ENCODE measurements at regions of chr1 and their contacts with region 1.

Region 1: DNA sequence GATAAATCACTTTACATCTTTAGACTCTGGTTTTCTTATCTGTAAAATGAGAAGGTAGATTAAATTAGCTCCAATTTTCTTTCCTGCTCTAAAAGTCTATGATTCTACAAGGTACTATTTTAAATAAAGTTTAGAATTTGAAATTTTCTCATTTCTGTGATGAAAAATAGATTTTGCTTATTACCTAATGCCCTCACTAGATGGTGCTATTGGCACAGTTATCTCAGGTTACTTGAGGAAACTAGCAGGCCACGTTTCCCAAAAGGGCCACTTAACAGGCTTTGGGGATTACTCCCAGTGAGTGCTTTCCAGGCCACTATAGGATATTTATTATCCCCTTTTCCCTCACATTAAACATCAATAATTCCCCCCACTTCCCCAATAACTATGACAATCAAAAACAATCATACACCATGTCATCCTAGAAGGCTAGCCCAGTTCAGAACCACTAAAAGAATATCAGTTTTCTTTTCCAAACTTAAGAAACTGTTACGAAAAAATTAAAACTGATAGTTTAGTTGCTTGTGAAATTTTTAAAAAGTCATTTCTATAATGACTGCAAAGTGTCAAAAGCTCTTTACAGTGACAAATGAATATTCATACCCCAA is 30.6 kb downstream of the OMA1 start:
- DNase-seq: peak in 1 of 2 donors; percentile 43
- ATAC-seq: peak in 4 of 8 donors; percentile 60 to 75 (median 70)
- H3K4me3 ChIP-seq: no peak overlapping the region
- H3K27ac ChIP-seq: peak overlapping the region in 1 of 10 donors; percentile 24
- H3K4me1 ChIP-seq: peaks cover 0 to 11% (median 0%) of the 10 kb centered on the region in 9 donors
- H3K27me3 ChIP-seq: no peaks in the 10 kb centered on the region
- CTCF ChIP-seq: peak; percentile 51 to 88 (median 76)

Region 2: DNA sequence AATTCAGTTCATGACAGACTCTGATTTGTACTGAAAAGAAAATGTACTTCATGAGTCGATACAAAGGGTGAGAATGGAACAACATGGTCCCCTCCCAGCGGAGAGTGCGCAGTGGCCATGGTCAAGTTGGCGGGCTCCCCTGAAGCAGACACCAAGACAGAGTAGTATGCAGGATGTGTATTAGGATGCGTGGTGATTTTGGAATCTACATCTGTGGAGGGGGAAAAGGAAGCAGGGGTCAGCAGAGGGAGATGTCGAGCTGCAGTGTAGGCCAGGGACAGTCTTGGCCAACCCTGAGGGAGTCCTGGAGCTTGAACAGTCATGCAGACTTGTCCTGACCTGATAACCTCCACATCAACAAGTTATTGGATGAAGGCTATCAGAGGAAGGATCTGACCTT is 450.4 kb before region 1 on chr1:
- intact Hi-C with region 1: no loop called
- DNase-seq: no peak
- ATAC-seq: no peak
- H3K4me3 ChIP-seq: no peak overlapping the region
- H3K27ac ChIP-seq: no peak overlapping the region
- H3K4me1 ChIP-seq: no peaks in the 10 kb centered on the region
- H3K27me3 ChIP-seq: peaks cover 0 to 4% (median 0%) of the 10 kb centered on the region in 7 donors
- CTCF ChIP-seq: no peak

Region 3: GRCh38 chr1:58546520-58547308 is 30.8 kb after region 1 on chr1 and contains the start of gene OMA1:
- intact Hi-C with region 1: loop called in 6 of 10 experiments (anchors 2 to 5 kb)
- DNase-seq: peak; percentile 97 to 98
- ATAC-seq: peak; percentile 99 to 100 (median 99)
- H3K4me3 ChIP-seq: peak within 1 kb of the TSS; percentile 37 to 87 (median 78)
- H3K27ac ChIP-seq: peak within 1 kb of the TSS; percentile 97 to 100 (median 99)
- H3K4me1 ChIP-seq: peaks cover 0 to 21% (median 14%) of the 10 kb centered on the region in 9 donors
- H3K27me3 ChIP-seq: no peaks in the 10 kb centered on the region
- CTCF ChIP-seq: peak; percentile 94 to 99 (median 97)
- total RNA-seq, gene OMA1: 20.7 to 50.9 (median 37.4) TPM

Region 4: DNA sequence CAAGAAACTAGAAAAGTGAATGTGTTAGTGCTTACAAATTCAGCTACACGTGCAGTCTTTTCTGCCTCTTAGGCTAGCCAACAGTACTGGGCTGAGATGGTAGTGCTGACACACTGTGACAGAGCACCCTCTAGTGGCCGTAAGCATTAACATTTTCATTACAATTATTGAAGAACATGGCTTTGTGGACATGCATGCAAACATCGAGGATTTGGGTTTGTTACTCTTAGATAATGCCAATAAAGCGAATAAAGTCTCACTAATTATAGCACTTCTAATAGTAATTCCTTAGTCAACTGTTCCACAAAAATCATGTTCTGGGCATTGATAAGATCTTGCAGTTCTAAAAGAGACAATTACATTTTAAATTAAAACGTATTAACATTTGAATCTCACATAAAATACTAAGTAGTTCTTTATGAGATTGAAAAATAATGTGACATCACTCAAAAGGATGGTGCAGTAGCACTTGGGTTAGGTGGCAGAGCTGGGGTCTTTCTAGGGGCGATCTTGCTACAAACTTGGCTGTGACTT is 136.8 kb after region 1 on chr1:
- intact Hi-C with region 1: loop called (anchors 1 to 10 kb)
- DNase-seq: peak in 1 of 2 donors; percentile 61
- ATAC-seq: peak; percentile 77 to 92 (median 86)
- H3K4me3 ChIP-seq: no peak overlapping the region
- H3K27ac ChIP-seq: no peak overlapping the region
- H3K4me1 ChIP-seq: peaks cover 0 to 13% (median 0%) of the 10 kb centered on the region in 9 donors
- H3K27me3 ChIP-seq: no peaks in the 10 kb centered on the region
- CTCF ChIP-seq: peak; percentile 67 to 88 (median 82)

Region 5: DNA sequence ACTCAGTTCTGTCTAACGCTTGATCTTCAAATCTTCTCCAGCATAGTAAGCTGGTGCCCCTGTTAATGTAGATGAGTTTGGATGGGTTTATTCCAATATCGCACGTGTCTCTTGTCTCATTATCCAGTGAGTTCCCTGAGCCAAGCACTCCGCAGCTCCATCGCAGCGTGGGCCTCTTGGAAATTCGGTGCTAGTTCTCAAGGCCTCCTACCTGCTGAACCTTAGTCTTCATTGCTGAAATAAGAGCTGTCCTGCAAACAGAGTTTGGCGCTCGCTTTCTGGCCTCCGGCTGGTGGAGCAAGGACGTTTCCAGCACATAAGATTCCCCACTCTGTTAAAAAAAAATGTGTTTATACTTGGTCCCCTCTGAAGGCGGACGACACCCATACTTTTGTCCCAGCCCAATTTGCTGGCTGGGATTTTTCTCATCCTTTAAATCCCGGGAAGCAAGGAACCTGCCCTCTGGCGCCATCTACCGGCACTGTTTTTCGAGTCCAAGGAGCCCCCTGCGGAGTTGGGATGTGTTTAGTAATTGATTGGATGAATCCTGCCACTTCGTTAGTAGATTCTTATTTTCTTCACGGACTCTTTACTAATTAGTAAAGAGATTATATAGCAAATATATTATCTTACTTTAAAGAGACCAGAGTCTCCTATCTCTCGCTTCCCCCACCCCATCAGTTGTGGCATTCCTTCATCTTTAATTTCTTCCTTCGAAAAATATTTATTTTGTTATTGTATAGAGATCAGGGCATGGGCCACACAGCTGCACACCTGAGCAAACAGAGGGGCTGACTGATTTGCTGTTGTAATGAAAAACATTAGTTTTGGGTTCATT is 253.3 kb after region 1 on chr1:
- intact Hi-C with region 1: loop called in 1 of 10 experiments (anchors 10 kb)
- DNase-seq: peak; percentile 85 to 86
- ATAC-seq: peak in 3 of 8 donors; percentile 30 to 42 (median 37)
- H3K4me3 ChIP-seq: no peak overlapping the region
- H3K27ac ChIP-seq: no peak overlapping the region
- H3K4me1 ChIP-seq: peaks cover 8 to 30% (median 23%) of the 10 kb centered on the region in 9 donors
- H3K27me3 ChIP-seq: no peaks in the 10 kb centered on the region
- CTCF ChIP-seq: peak; percentile 68 to 91 (median 89)

Measured in heart right ventricle (tissue), 16 donors.